PC-9 (cell line): ENCODE measurements at regions of chr2 and their contacts with region 1.

Region 1: GRCh38 chr2:168884975-168885374 is 5.3 kb downstream of the SPC25 start:
- DNase-seq: no peak
- H3K4me3 ChIP-seq: no peak overlapping the region
- H3K27ac ChIP-seq: no peak overlapping the region
- H3K4me1 ChIP-seq: no peaks in the 10 kb centered on the region
- H3K27me3 ChIP-seq: no peaks in the 10 kb centered on the region
- CTCF ChIP-seq: no peak

Region 2: DNA sequence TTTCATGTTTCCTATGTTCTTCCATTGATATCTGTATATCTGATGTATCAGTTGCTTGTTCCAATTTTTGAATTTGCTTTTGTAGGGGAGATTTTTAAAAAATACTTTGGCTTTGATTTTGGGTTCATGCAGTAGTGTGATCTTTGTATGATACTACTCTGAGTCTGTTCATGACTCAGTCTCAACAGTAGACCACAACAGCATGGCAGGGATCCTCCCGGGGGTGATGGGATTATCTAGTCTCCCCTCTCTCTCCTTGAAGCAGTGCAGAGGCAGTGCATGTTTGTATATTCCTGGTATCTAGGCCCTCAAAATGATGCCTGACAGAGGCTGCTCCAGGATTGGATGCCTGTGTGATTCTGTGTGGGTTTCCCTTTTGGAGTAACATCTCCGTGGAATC is 71.4 kb after region 1 on chr2:
- CTCF ChIA-PET with region 1: no interaction called
- POLR2A ChIA-PET with region 1: no interaction called
- intact Hi-C with region 1: no loop called
- DNase-seq: no peak
- H3K4me3 ChIP-seq: no peak overlapping the region
- H3K27ac ChIP-seq: no peak overlapping the region
- H3K4me1 ChIP-seq: no peaks in the 10 kb centered on the region
- H3K27me3 ChIP-seq: no peaks in the 10 kb centered on the region
- CTCF ChIP-seq: no peak

Region 3: DNA sequence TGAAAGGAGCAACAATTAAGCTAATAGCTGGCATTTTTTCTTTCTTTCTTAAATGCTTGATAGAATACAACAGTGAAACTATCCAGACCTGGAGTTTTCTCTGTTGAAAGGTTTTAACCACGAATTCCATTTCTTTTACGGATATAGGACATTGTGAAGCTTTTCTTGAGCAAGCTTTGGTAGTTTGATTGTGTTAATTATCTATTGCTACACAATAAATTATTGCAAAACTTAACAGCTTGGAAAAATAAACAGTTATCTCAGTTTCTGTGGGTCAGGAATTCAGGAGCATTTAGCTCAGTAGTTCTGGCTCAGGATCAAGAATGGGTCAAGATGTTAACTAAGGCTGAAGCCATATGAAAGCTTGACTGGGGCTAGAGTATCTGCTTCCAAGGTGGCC is 821.0 kb after region 1 on chr2:
- CTCF ChIA-PET with region 1: no interaction called
- POLR2A ChIA-PET with region 1: interaction called, 11 read pairs
- intact Hi-C with region 1: no loop called
- DNase-seq: no peak
- H3K4me3 ChIP-seq: no peak overlapping the region
- H3K27ac ChIP-seq: no peak overlapping the region
- H3K4me1 ChIP-seq: no peaks in the 10 kb centered on the region
- H3K27me3 ChIP-seq: no peaks in the 10 kb centered on the region
- CTCF ChIP-seq: no peak